PC-3 (cell line): ENCODE measurements at regions of chr6 and their contacts with region 1.

Region 1: GRCh38 chr6:152484806-152485205 is 152.4 kb downstream of the SYNE1 start:
- DNase-seq: no peak
- ATAC-seq: no peak
- H3K4me3 ChIP-seq: no peak overlapping the region
- H3K27ac ChIP-seq: no peak overlapping the region
- H3K4me1 ChIP-seq: no peaks in the 10 kb centered on the region
- H3K27me3 ChIP-seq: no peaks in the 10 kb centered on the region
- CTCF ChIP-seq: no peak

Region 2: DNA sequence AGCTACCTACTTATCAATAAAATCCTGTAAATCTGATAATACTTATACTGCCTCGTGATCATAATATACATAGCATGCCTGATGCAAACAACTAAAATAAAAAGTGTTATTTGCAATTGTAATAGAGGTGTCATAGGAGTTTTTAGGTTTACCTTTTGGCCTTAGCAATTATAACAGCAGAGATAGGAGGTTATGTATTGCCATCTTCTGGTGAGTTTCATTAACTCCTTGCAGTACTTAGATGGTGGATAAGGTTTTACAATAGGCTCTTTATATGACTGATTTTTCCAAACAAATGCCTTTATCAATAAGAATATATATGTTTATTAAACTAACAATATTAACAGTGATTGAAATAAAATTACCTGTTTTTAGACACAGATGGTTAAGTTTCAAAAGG is 185.1 kb after region 1 on chr6:
- CTCF ChIA-PET with region 1: no interaction called
- POLR2A ChIA-PET with region 1: no interaction called
- intact Hi-C with region 1: loop called (anchors 2 kb)
- DNase-seq: peak; percentile 44
- ATAC-seq: no peak
- H3K4me3 ChIP-seq: no peak overlapping the region
- H3K27ac ChIP-seq: no peak overlapping the region
- H3K4me1 ChIP-seq: no peaks in the 10 kb centered on the region
- H3K27me3 ChIP-seq: peaks cover 45% of the 10 kb centered on the region
- CTCF ChIP-seq: peak; percentile 57